OCI-LY7 (cell line): ENCODE measurements at regions of chr14 and their contacts with region 1.

Region 1: DNA sequence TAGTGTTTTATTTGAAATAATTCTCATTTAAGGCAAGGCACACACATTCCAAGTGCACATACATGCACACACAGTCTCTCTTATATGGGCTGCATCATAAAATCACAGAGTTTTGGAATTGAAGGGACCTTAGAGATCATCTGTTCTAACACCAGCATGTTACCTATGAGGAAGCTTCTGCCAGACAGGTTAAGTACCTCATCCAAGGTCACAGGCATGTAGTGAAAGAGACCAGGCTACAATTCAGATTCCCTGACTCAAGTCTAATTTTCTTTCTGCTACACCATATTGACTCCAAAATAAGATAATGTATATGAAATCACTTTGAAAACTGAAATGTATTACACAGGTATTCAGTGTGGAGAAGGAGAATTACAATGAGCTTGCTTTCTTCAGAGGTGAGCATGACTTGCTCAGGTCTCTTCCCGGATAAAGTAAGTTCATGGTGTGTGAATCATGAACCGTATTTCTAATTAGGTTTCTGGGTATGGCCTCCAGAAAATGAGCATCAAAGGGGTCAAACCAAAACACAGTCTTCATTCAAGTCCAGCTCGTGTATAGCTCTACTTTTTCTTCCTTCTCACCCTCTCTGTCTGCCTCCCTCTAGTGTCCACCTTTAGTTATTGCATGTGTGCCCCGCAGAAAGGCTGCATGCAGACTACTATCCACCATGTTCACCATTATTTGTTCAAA is 411.9 kb downstream of the FUT8 start:
- DNase-seq: peak; percentile 72
- H3K4me3 ChIP-seq: no peak overlapping the region
- H3K27ac ChIP-seq: no peak overlapping the region
- H3K4me1 ChIP-seq: no peaks in the 10 kb centered on the region
- CTCF ChIP-seq: peak; percentile 97

Region 2: DNA sequence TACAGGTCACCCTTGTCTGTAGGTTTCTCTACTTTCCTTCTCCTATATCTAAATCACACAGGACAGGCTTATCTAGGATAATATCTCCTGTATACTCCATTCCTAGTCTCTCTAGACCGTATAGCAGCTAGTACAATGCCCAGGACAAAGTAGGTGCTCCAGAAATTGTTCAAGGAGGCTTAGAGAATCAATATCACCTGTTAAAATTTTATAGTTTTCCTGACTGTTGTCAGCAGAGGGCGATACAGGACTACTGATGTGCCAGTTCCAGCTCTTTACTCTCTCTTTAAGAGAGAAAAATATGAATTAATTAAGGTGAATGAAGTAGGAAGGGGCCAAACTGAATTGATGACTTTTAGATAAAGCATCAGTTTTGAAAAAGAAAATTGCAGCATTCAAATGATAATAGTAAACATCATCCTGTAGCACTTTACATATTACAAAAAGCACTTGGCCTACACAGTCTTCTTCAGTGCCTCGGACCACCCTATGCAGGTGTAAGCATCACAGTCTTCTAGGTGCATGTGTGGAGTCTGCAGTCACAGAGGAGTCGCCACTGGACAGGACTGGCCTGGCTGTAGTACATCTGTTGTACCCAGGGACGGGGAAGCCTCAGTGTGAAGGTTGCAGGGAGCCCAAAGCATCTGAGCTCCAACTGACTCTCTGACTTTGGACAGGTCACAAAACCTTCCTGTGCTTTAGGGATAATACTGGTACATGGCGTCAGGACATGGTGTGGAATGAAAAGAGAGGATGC is 660.2 kb before region 1 on chr14:
- CTCF ChIA-PET with region 1: interaction called, 4 read pairs
- POLR2A ChIA-PET with region 1: no interaction called
- intact Hi-C with region 1: loop called (anchors 1 kb)
- DNase-seq: peak; percentile 79
- H3K4me3 ChIP-seq: no peak overlapping the region
- H3K27ac ChIP-seq: peak overlapping the region; percentile 17
- H3K4me1 ChIP-seq: peaks cover 53% of the 10 kb centered on the region
- CTCF ChIP-seq: peak; percentile 99

Region 3: DNA sequence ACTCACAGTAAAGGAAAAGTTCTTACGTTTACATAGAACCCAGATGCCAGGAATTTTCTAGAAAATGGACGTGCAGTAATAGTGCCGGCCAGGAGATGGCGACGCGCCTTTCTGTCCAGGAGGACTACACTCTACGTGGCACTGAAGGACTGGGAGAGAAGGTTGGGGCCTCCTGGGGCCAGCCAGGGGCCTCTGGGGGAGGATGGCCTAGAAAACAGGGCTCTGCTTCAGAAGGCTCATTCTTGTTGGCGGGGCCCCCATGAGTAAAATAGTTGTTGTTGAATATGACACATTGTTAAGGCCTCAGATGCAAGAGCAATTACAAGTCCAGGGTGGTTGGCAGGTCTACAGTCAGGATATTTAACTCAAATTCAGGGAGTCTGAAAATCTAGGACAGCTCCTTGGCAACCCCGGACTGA is 602.0 kb before region 1 on chr14:
- CTCF ChIA-PET with region 1: no interaction called
- POLR2A ChIA-PET with region 1: no interaction called
- intact Hi-C with region 1: loop called (anchors 1 kb)
- DNase-seq: peak; percentile 77
- H3K4me3 ChIP-seq: no peak overlapping the region
- H3K27ac ChIP-seq: no peak overlapping the region
- H3K4me1 ChIP-seq: peaks cover 50% of the 10 kb centered on the region
- CTCF ChIP-seq: peak; percentile 99

Region 4: GRCh38 chr14:65255536-65256461 is 568.6 kb before region 1 on chr14:
- CTCF ChIA-PET with region 1: interaction called, 3 read pairs
- POLR2A ChIA-PET with region 1: no interaction called
- intact Hi-C with region 1: loop called (anchors 10 kb)
- DNase-seq: peak; percentile 77
- H3K4me3 ChIP-seq: no peak overlapping the region
- H3K27ac ChIP-seq: no peak overlapping the region
- H3K4me1 ChIP-seq: peaks cover 35% of the 10 kb centered on the region
- CTCF ChIP-seq: peak; percentile 72

Region 5: GRCh38 chr14:65866886-65867285 is 42.5 kb after region 1 on chr14:
- CTCF ChIA-PET with region 1: no interaction called
- POLR2A ChIA-PET with region 1: no interaction called
- intact Hi-C with region 1: no loop called
- DNase-seq: no peak
- H3K4me3 ChIP-seq: no peak overlapping the region
- H3K27ac ChIP-seq: no peak overlapping the region
- H3K4me1 ChIP-seq: no peaks in the 10 kb centered on the region
- CTCF ChIP-seq: no peak

Region 6: GRCh38 chr14:65910108-65910786 is 85.8 kb after region 1 on chr14:
- CTCF ChIA-PET with region 1: no interaction called
- POLR2A ChIA-PET with region 1: no interaction called
- intact Hi-C with region 1: no loop called
- DNase-seq: no peak
- H3K4me3 ChIP-seq: no peak overlapping the region
- H3K27ac ChIP-seq: no peak overlapping the region
- H3K4me1 ChIP-seq: no peaks in the 10 kb centered on the region
- CTCF ChIP-seq: no peak

Region 7: DNA sequence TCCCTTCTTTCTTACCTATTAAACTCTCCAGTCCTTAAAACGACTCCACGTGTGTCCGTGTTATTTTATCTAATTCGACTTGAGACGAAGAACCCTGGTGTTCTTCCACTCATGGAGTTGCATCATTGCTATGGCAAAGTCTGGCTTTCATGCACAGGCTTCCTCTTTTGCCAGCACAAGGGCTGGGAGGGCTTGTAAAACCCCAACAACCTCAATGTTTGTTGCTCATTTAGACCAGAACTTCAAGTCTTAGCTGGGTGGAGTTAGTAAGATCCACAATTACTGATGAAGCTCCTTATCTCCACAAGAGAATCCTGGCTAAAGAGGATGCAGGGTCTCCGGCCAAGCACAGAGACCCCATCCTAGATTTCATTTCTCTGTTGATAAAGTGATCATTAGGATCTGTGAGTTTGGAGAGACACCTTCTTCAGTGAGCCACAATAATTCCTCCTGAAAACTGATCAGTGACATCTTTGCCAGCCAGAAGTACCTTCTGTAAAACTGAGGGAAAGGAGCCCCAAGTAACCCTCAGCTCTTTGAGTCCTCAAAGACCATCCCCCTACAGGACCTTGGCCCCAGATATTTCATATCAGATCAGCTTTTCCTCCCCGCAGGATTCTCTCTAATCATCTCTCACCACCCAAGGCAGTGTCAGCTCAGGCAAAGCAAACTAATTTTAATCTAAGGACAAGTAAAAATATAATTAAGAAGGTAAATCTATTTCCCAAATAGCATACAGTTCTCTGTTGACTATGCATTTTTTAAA is 102.7 kb after region 1 on chr14:
- CTCF ChIA-PET with region 1: no interaction called
- POLR2A ChIA-PET with region 1: no interaction called
- intact Hi-C with region 1: no loop called
- DNase-seq: no peak
- H3K4me3 ChIP-seq: no peak overlapping the region
- H3K27ac ChIP-seq: no peak overlapping the region
- H3K4me1 ChIP-seq: peaks cover 8% of the 10 kb centered on the region
- CTCF ChIP-seq: no peak

Region 8: GRCh38 chr14:66022526-66022925 is 198.1 kb after region 1 on chr14:
- CTCF ChIA-PET with region 1: no interaction called
- POLR2A ChIA-PET with region 1: no interaction called
- intact Hi-C with region 1: no loop called
- DNase-seq: no peak
- H3K4me3 ChIP-seq: no peak overlapping the region
- H3K27ac ChIP-seq: no peak overlapping the region
- H3K4me1 ChIP-seq: no peaks in the 10 kb centered on the region
- CTCF ChIP-seq: no peak